Psoas muscle (tissue), 8 donors: ENCODE measurements at regions of chr20 and their contacts with region 1.

Region 1: GRCh38 chr20:17431621-17432364 is 99.4 kb downstream of the BFSP1 start:
- DNase-seq: peak; percentile 41 to 69
- ATAC-seq: no peak
- H3K4me3 ChIP-seq: no peak overlapping the region
- H3K27ac ChIP-seq: no peak overlapping the region
- H3K4me1 ChIP-seq: no peaks in the 10 kb centered on the region
- H3K27me3 ChIP-seq: peaks cover 0 to 8% (median 0%) of the 10 kb centered on the region in 3 donors
- CTCF ChIP-seq: peak; percentile 88

Region 2: GRCh38 chr20:16801919-16802911 is 629.6 kb before region 1 on chr20:
- intact Hi-C with region 1: loop called (anchors 1 to 2 kb)
- DNase-seq: peak; percentile 40 to 67
- ATAC-seq: no peak
- H3K4me3 ChIP-seq: no peak overlapping the region
- H3K27ac ChIP-seq: no peak overlapping the region
- H3K4me1 ChIP-seq: no peaks in the 10 kb centered on the region
- H3K27me3 ChIP-seq: peaks cover 0 to 22% (median 0%) of the 10 kb centered on the region in 3 donors
- CTCF ChIP-seq: peak; percentile 75

Region 3: GRCh38 chr20:17202673-17203072 is 229.1 kb before region 1 on chr20:
- intact Hi-C with region 1: no loop called
- DNase-seq: no peak
- ATAC-seq: no peak
- H3K4me3 ChIP-seq: no peak overlapping the region
- H3K27ac ChIP-seq: no peak overlapping the region
- H3K4me1 ChIP-seq: no peaks in the 10 kb centered on the region
- H3K27me3 ChIP-seq: no peaks in the 10 kb centered on the region
- CTCF ChIP-seq: no peak